ENCODE measurements at regions of chr9 and their contacts with region 1.

Region 1: DNA sequence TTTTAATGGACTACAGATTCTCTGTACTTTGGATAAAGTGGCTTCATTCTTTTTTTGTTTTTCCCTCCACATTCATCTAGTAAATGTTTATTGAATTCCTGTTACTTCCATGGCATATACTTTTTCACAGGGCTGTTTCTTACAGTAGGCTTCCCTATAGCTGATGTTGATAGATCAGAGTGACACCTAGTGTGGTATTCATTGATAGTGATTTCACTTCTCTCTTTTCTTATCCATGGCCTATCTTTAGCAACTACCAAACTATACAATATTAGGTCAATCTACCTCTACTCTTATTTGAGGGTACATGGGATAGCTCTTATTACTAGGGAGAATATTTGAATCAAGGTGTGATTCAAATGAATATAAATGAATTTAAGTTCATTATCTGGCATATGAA is 35.8 kb downstream of the FSD1L start:
- DNase-seq: no peak
- ATAC-seq: no peak
- H3K4me3 ChIP-seq: no peak overlapping the region
- H3K4me3 Mint-ChIP-seq: no peak overlapping the region
- H3K27ac ChIP-seq: no peak overlapping the region
- H3K27ac Mint-ChIP-seq: no peak overlapping the region
- H3K4me1 ChIP-seq: no peaks in the 10 kb centered on the region
- H3K4me1 Mint-ChIP-seq: no peaks in the 10 kb centered on the region
- H3K27me3 ChIP-seq: no peaks in the 10 kb centered on the region
- H3K27me3 Mint-ChIP-seq: no peaks in the 10 kb centered on the region

Region 2: GRCh38 chr9:103669296-103669695 is 1814.3 kb before region 1 on chr9:
- CTCF ChIA-PET with region 1: no interaction called
- POLR2A ChIA-PET with region 1: no interaction called
- intact Hi-C with region 1: no loop called
- DNase-seq: no peak
- ATAC-seq: no peak
- H3K4me3 ChIP-seq: no peak overlapping the region
- H3K4me3 Mint-ChIP-seq: no peak overlapping the region
- H3K27ac ChIP-seq: no peak overlapping the region
- H3K27ac Mint-ChIP-seq: no peak overlapping the region
- H3K4me1 ChIP-seq: no peaks in the 10 kb centered on the region
- H3K4me1 Mint-ChIP-seq: no peaks in the 10 kb centered on the region
- H3K27me3 ChIP-seq: no peaks in the 10 kb centered on the region
- H3K27me3 Mint-ChIP-seq: no peaks in the 10 kb centered on the region

Region 3: DNA sequence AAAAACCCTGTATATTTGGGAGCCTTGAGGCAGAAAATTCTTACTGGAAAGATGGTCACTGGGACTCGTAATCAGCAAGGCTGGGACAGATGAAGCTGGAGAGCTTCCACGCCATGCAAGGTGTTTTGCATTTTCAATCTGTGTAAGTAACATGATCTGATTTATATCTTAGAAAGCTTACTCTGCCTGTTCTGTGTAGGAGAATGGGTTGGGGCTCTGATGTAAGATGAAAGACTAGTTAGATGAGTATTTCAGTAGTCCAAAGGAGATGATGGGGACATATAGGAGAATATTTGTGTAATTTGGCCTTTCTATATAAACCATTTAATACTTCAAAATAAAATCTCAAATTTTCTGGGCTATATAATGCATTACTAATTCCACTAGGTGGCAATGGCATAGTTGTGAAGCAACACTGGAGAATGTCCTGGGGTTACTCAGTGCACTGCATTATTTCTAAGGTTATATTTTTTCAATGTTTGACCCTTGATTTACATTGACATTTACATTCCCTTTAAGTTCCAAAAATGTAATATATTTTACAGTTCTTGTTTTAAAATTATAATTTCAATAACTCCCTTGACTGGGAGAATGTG is 57.7 kb before region 1 on chr9:
- CTCF ChIA-PET with region 1: no interaction called
- POLR2A ChIA-PET with region 1: no interaction called
- intact Hi-C with region 1: loop called in 1 of 2 experiments (anchors 5 kb)
- DNase-seq: no peak
- ATAC-seq: no peak
- H3K4me3 ChIP-seq: no peak overlapping the region
- H3K4me3 Mint-ChIP-seq: no peak overlapping the region
- H3K27ac ChIP-seq: no peak overlapping the region
- H3K27ac Mint-ChIP-seq: no peak overlapping the region
- H3K4me1 ChIP-seq: no peaks in the 10 kb centered on the region
- H3K4me1 Mint-ChIP-seq: no peaks in the 10 kb centered on the region
- H3K27me3 ChIP-seq: no peaks in the 10 kb centered on the region
- H3K27me3 Mint-ChIP-seq: peaks cover 0 to 4% (median 0%) of the 10 kb centered on the region in 5 donors